AG04449 (cell line): ENCODE measurements at regions of chr16 and their contacts with region 1.

Region 1: GRCh38 chr16:57899771-57900661 is 70.9 kb downstream of the CNGB1 start:
- DNase-seq: no peak
- H3K4me3 ChIP-seq: no peak overlapping the region
- CTCF ChIP-seq: peak; percentile 84

Region 2: GRCh38 chr16:57852189-57852588 is 47.8 kb before region 1 on chr16:
- CTCF ChIA-PET with region 1: no interaction called
- POLR2A ChIA-PET with region 1: no interaction called
- DNase-seq: no peak
- H3K4me3 ChIP-seq: no peak overlapping the region
- CTCF ChIP-seq: no peak

Region 3: DNA sequence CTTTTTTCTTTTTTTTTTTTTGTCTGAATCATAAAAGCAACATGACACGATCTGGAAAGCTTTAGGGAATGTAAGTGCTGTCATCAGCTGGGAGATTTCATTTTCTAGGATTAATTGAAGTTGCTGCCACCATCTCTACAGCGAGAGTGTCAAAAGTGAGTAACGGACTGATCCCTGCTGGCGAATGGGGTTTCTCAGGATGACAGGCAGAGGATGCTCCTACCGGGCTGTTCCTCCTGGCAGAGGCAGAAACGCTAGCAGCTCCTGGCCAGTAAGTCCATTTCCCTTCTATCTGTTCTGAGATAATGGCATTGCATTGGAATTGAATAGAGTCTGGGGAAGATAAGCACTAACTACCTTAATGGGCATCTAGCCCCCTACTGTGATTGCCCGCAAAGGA is 17.2 kb before region 1 on chr16:
- CTCF ChIA-PET with region 1: interaction called, 39 read pairs
- POLR2A ChIA-PET with region 1: no interaction called
- DNase-seq: no peak
- H3K4me3 ChIP-seq: no peak overlapping the region
- CTCF ChIP-seq: no peak

Region 4: DNA sequence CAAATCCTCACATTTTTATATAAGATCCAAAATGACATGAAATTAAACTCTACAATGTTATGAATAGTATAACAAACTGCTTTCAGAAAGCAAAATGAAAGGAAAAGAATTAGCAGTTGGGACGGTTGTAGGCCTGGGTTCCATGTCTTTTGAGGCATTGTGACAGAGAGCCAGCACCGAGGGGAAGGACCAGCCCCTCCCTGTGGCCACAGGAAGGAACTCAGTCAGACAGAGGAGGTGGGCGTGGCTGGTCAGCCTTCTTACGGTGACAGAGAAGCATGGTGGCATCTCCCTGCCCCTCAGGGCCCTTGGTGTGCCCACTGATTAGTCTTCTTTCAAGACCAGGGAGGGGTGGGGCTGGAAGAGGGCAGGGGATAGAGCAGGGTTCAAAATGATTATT is 94.8 kb after region 1 on chr16:
- CTCF ChIA-PET with region 1: interaction called, 161 read pairs
- POLR2A ChIA-PET with region 1: no interaction called
- DNase-seq: no peak
- H3K4me3 ChIP-seq: no peak overlapping the region
- CTCF ChIP-seq: peak; percentile 45

Region 5: GRCh38 chr16:58025351-58026138 is 125.5 kb after region 1 on chr16 and contains the start of gene MMP15:
- CTCF ChIA-PET with region 1: interaction called, 13 read pairs
- POLR2A ChIA-PET with region 1: no interaction called
- DNase-seq: no peak
- H3K4me3 ChIP-seq: peak within 1 kb of the TSS; percentile 60
- CTCF ChIP-seq: no peak

Region 6: GRCh38 chr16:58127033-58127556 is 227.1 kb after region 1 on chr16:
- CTCF ChIA-PET with region 1: interaction called, 20 read pairs
- POLR2A ChIA-PET with region 1: interaction called, 3 read pairs
- DNase-seq: no peak
- H3K4me3 ChIP-seq: peak overlapping the region; percentile 96
- CTCF ChIP-seq: peak; percentile 12